ENCODE measurements at regions of chr1 and their contacts with region 1.

Region 1: DNA sequence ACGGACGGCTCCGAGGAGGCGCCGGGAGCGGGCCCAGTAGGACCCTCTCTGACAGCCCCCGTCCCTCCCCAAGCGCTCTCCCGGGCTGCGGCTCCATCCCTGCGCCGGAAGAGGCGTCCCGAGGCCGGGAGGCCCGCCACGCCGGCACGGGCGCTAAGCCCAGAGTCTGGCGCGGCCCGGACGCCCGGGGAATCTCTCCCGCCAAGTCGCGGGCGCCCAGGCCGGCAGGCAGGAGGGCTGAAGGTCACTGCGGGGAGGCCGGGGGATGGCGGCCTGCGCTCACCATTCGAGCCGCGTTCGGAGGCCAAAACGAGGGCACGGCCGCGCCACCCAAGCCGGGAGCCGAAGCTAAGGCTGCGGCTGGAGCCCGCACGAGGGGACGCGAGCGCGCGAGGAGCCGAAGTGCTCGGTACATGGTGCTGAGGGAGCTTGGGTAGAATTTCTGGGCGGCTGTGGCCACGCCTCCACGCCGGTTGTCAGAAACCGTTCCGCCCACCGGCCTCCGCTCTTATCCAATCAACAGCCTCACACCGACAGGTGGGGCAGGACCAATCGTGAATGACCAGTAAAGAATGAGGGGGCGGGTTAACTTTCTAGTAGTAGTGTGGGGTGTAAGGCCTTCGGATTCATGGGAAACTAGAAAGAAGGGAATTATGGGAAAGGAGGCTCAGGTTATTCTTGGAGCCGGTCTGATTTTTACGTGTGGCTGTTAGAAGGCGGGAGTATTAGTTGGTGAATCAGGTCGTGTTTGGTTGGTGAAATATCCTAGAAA is at the start of gene FH:
- DNase-seq: peak; percentile 94 to 97
- ATAC-seq: peak; percentile 99 to 100 (median 100)
- H3K4me3 ChIP-seq: peak within 1 kb of the TSS; percentile 67 to 97 (median 87)
- H3K27ac ChIP-seq: peak within 1 kb of the TSS; percentile 83 to 95 (median 93)
- H3K4me1 ChIP-seq: peaks cover 0 to 32% (median 21%) of the 10 kb centered on the region in 9 donors
- H3K27me3 ChIP-seq: peaks cover 0 to 26% (median 0%) of the 10 kb centered on the region in 7 donors
- CTCF ChIP-seq: no peak
- total RNA-seq, gene FH: 178 to 268 (median 257) TPM

Region 2: DNA sequence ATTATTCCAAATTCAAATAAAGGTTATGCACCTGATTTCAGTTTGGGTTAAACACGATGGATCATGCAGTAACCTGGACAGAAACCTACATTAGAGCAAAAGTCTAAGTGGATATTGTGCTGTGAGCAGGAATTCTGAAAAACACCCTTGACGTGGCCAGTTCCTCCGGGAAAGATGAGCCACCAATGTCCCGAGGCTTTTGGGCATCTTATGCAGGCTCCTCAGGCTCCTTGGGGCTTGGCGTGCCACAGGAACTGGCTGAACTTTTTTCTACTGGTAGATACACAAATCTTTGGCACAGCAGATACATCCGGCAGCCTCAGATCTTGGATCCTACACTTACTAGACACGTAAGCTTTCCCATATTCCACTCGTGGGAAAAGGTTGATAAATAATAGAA is 47.2 kb after region 1 on chr1:
- intact Hi-C with region 1: no loop called
- DNase-seq: no peak
- ATAC-seq: no peak
- H3K4me3 ChIP-seq: no peak overlapping the region
- H3K27ac ChIP-seq: no peak overlapping the region
- H3K4me1 ChIP-seq: no peaks in the 10 kb centered on the region
- H3K27me3 ChIP-seq: no peaks in the 10 kb centered on the region
- CTCF ChIP-seq: no peak

Region 3: GRCh38 chr1:241640029-241640818 is 120.7 kb after region 1 on chr1 and contains the starts of genes CHML and OPN3:
- intact Hi-C with region 1: loop called in 1 of 10 experiments (anchors 5 kb)
- DNase-seq: peak; percentile 93 to 97
- ATAC-seq: peak; percentile 98 to 100 (median 100)
- H3K4me3 ChIP-seq: peak within 1 kb of the TSS; percentile 71 to 100 (median 91)
- H3K27ac ChIP-seq: peak within 1 kb of the TSS in 9 of 10 donors; percentile 77 to 91 (median 83)
- H3K4me1 ChIP-seq: peaks cover 0 to 40% (median 12%) of the 10 kb centered on the region in 9 donors
- H3K27me3 ChIP-seq: no peaks in the 10 kb centered on the region
- CTCF ChIP-seq: peak in 1 of 9 donors; percentile 1
- total RNA-seq, gene CHML: 4.8 to 11.4 (median 8.0) TPM
- total RNA-seq, gene OPN3: 3.3 to 9.1 (median 4.9) TPM